Testis (tissue), 5 donors: ENCODE measurements at regions of chr3 and their contacts with region 1.

Region 1: DNA sequence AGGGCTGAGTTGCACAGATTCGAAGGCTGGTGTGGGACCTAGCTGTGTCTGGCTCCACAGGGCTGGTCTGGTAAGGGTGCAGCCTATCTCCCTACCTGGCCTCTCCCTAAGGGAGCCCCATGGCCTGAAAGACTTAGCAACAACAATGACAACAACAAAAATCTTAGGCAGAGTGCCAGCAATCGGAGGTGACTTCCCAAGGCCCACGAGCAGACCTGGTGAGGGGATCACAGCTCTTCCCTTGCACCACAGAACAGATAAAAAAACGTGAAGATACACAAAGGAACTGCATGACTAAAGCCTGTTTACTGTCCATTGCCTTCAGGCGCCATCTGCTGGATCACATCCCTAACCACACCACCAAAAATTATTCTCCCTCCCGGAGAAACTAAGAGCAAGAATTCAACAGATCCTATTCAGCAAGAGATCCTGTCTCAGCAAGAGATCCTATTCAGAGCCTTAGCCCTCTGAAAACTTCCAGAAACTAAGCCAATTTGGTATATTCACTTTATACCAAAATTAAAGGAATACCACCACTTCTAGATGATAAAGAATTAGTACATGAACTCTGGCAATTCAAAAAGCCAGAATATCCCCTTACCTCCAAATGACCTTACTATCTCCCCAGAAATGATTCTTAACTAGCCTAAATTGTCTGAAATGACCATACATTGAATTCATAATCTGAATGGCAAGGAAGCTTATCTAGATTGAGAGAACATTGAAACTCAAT is 24.1 kb upstream of the OR5K4 start:
- DNase-seq: peak; percentile 59
- H3K4me3 ChIP-seq: no peak overlapping the region
- H3K27ac ChIP-seq: no peak overlapping the region
- H3K4me1 ChIP-seq: no peaks in the 10 kb centered on the region
- H3K27me3 ChIP-seq: no peaks in the 10 kb centered on the region
- CTCF ChIP-seq: peak; percentile 34 to 65 (median 50)
- POLR2A ChIP-seq: no peak

Region 2: DNA sequence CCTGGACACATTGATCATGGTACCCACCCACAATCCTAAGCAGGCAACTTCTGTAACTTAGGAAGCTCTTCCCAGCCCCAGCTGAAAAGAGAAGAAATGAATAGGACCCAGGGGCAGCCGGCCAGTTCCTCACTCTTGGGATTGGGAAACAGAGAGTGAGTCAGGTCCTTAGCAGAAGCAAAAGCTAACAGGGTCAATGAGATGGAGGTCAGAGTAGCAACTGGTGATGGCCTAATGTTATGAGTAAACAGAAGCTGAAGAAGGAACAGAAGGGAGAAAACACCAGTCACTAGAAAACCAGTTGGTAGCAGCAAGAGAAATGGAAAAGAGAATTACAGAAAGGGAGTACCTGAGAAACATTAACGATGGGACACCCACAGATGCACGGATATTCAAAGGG is 377.3 kb before region 1 on chr3:
- intact Hi-C with region 1: no loop called
- DNase-seq: no peak
- H3K4me3 ChIP-seq: no peak overlapping the region
- H3K27ac ChIP-seq: no peak overlapping the region
- H3K4me1 ChIP-seq: no peaks in the 10 kb centered on the region
- H3K27me3 ChIP-seq: no peaks in the 10 kb centered on the region
- CTCF ChIP-seq: no peak
- POLR2A ChIP-seq: no peak

Region 3: DNA sequence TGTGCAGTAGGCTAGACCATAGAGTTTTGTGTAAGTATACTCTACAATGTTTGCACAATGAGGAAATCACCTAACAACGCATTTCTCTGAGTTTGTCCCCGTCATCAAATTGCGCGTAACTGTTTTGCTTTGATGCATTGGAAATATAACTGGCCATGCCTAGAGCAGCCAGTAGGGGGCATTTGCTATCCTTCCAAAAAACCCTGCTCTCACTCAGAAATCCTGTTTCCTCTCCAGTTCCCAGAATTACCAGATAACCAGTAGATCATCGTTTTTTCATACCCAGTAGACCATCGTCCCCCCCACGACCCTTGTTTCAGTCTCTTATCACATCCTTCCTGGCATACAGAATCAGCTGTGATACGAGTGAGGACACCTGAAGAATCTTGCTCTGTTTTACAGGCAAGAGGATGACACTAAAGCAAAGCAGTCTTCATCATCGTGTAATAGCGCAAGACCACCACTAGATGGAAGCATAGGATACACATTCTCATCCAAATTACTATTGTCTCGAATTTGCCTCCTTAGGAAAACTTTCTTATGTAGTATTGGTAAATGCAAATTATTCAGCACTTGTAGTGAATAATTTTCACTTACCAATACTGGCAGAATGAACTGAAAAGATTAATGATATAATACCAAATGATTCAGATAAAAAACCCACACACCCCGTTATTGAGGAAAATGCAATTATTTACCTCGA is 290.1 kb before region 1 on chr3:
- intact Hi-C with region 1: loop called (anchors 10 kb)
- DNase-seq: peak; percentile 75
- H3K4me3 ChIP-seq: peak overlapping the region; percentile 10 to 22
- H3K27ac ChIP-seq: no peak overlapping the region
- H3K4me1 ChIP-seq: no peaks in the 10 kb centered on the region
- H3K27me3 ChIP-seq: no peaks in the 10 kb centered on the region
- CTCF ChIP-seq: peak; percentile 77 to 93 (median 78)
- POLR2A ChIP-seq: no peak